Activated T-helper 1 cell treated with anti-CD3 and anti-CD28 coated beads, Interleukin-12 subunit alpha, Interleukin-12 subunit beta, Interleukin-2, Interleukin-4 antibody, amounts not matched to agents 30 ng/mL and 10 ng/mL and 1 ng/mL, durations not matched to agents 14 hours and 24 hours and 36 hours (primary cell): ENCODE measurements at regions of chr10 and their contacts with region 1.

Region 1: DNA sequence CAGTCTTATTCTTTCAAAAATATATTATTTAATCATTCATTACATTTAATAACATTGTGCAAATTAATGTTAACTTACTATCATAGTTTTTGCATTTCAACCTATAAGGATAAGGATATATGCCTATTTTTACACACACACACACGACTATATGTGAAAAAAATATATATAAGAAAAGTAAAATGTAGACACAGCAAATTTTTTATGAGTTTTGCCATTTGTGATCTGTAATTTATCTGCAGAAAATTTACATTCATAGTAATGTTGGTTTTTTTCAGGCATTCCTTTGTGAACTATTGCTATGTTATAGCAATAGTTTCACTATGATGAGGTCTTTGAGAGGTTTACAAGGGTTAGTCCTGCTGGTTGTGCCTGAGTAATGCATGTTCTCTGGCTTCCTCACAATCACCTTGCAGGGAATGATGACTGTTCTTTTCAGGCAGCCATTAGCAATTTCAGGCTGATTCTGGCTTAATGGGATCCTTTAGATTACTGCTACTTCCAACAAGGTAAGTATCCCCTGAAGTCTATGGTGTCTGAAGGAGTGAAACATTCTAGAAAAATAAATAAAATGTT is 183.7 kb upstream of the CDK1 start:
- DNase-seq: no peak
- H3K4me3 Mint-ChIP-seq: no peak overlapping the region
- H3K27ac Mint-ChIP-seq: no peak overlapping the region
- H3K4me1 Mint-ChIP-seq: peaks cover 26% of the 10 kb centered on the region
- H3K27me3 Mint-ChIP-seq: no peaks in the 10 kb centered on the region

Region 2: GRCh38 chr10:60611291-60611747 is 16.8 kb after region 1 on chr10:
- intact Hi-C with region 1: loop called (anchors 2 kb)
- DNase-seq: no peak
- H3K4me3 Mint-ChIP-seq: peak overlapping the region; percentile 1
- H3K27ac Mint-ChIP-seq: peak overlapping the region; percentile 49
- H3K4me1 Mint-ChIP-seq: peaks cover 30% of the 10 kb centered on the region
- H3K27me3 Mint-ChIP-seq: no peaks in the 10 kb centered on the region